ENCODE measurements at regions of chr4 and their contacts with region 1.

Region 1: DNA sequence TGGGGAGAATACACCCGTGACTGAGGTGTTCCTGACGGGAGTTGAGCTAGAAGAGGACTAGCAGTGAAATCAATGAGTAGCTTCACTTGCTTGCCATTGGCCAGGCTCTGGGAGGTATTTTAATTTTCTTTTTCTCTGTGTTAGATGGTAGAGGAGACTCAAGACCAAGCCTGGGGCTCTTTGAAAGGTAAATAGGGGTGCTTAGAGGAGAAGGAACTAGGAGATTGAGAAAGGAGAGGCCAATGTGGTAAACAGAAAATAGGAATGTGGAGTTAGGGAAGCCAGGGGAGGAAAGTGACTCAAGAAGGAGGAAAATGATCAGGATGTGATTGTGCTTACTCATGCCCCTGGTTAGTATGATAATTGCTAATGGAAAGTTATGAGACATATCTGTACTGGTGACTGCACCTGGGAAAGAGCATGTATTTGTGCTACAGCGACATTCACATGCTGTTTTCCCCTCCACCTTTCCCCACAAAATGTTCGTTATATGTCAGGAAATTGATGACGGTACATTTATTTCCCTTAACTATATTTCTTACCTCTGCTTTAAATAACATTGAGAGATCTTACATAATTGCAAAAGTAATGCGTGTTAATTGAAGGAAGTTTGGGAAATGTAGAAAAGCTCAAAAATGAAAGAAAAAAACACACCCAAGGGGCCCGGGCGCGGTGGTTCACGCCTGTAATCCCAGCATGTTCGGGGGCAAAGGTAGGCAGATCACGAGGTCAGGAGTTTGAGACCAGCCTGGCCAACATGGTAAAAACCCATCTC is 16.9 kb upstream of the LRBA start:
- DNase-seq: no peak
- H3K4me3 Mint-ChIP-seq: peak overlapping the region; percentile 73
- H3K27ac Mint-ChIP-seq: peak overlapping the region; percentile 88
- H3K4me1 Mint-ChIP-seq: peaks cover 37% of the 10 kb centered on the region
- H3K27me3 Mint-ChIP-seq: no peaks in the 10 kb centered on the region

Region 2: GRCh38 chr4:150436598-150437370 is 595.2 kb before region 1 on chr4:
- intact Hi-C with region 1: loop called (anchors 2 kb)
- DNase-seq: no peak
- H3K4me3 Mint-ChIP-seq: no peak overlapping the region
- H3K27ac Mint-ChIP-seq: peak overlapping the region; percentile 1
- H3K4me1 Mint-ChIP-seq: peaks cover 13% of the 10 kb centered on the region
- H3K27me3 Mint-ChIP-seq: no peaks in the 10 kb centered on the region

Region 3: GRCh38 chr4:150943818-150944217 is 88.2 kb before region 1 on chr4:
- intact Hi-C with region 1: loop called (anchors 5 kb)
- DNase-seq: no peak
- H3K4me3 Mint-ChIP-seq: no peak overlapping the region
- H3K27ac Mint-ChIP-seq: peak overlapping the region; percentile 49
- H3K4me1 Mint-ChIP-seq: peaks cover 28% of the 10 kb centered on the region
- H3K27me3 Mint-ChIP-seq: no peaks in the 10 kb centered on the region

Region 4: GRCh38 chr4:150986085-150986484 is 45.9 kb before region 1 on chr4:
- intact Hi-C with region 1: loop called (anchors 1 kb)
- DNase-seq: no peak
- H3K4me3 Mint-ChIP-seq: no peak overlapping the region
- H3K27ac Mint-ChIP-seq: peak overlapping the region; percentile 80
- H3K4me1 Mint-ChIP-seq: peaks cover 29% of the 10 kb centered on the region
- H3K27me3 Mint-ChIP-seq: no peaks in the 10 kb centered on the region

Region 5: GRCh38 chr4:152696764-152697261 is 1664.8 kb after region 1 on chr4:
- intact Hi-C with region 1: loop called (anchors 10 kb)
- DNase-seq: peak; percentile 64
- H3K4me3 Mint-ChIP-seq: no peak overlapping the region
- H3K27ac Mint-ChIP-seq: no peak overlapping the region
- H3K4me1 Mint-ChIP-seq: peaks cover 23% of the 10 kb centered on the region
- H3K27me3 Mint-ChIP-seq: peaks cover 13% of the 10 kb centered on the region

Measured in activated T-helper 1 cell treated with anti-CD3 and anti-CD28 coated beads, Interleukin-12 subunit alpha, Interleukin-12 subunit beta, Interleukin-2, Interleukin-4 antibody, amounts not matched to agents 30 ng/mL and 10 ng/mL and 1 ng/mL, durations not matched to agents 14 hours and 24 hours and 36 hours (primary cell).